ENCODE measurements at regions of chr2 and their contacts with region 1.

Region 1: DNA sequence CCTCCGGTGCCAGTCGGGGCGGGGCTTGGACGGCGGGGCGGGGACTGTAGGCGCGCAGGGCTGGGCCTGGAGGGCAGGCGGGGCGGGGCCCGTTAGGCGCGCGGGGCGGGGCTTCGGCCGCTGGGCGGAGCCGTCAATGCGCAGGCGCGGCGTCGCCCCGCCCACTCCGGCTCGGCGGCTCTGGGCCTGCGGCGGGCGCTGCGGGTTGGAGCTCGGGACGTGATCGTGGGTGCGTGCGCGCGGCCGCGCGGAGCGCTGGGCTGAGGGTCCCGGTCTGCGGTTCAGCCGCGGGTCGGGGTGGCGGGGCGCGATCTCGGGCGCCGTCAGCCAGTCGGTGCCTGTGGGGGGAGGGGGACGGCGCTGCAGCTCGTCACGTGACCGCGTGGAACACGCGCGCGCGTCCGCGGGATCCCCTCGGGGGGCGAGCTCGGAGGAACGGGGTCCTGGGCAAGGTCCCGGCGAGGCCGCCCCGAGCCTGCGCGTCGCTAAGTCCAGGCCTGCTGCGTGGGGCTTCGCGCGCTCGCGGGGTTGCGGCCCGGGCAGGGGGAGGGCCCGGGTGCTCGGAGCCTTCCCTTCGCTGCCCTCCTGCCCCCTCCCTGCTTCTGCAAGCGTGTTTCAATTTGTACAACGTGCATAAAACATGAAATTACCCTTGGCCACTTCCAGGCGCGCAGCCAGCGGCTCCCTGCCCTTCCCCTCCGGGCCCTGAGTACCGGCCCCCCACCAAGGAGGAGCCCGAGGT is at the start of gene D2HGDH:
- H3K4me3 Mint-ChIP-seq: peak within 1 kb of the TSS; percentile 82
- H3K27ac Mint-ChIP-seq: peak within 1 kb of the TSS; percentile 70
- H3K4me1 Mint-ChIP-seq: peaks cover 54% of the 10 kb centered on the region
- H3K27me3 Mint-ChIP-seq: peaks cover 6% of the 10 kb centered on the region

Region 2: GRCh38 chr2:241702132-241703031 is 32.3 kb before region 1 on chr2:
- intact Hi-C with region 1: loop called (anchors 2 kb)
- H3K4me3 Mint-ChIP-seq: peak overlapping the region; percentile 78
- H3K27ac Mint-ChIP-seq: peak overlapping the region; percentile 81
- H3K4me1 Mint-ChIP-seq: peaks cover 18% of the 10 kb centered on the region
- H3K27me3 Mint-ChIP-seq: no peaks in the 10 kb centered on the region

Region 3: GRCh38 chr2:241859436-241860183 is 125.0 kb after region 1 on chr2:
- intact Hi-C with region 1: no loop called
- H3K4me3 Mint-ChIP-seq: no peak overlapping the region
- H3K27ac Mint-ChIP-seq: peak overlapping the region; percentile 64
- H3K4me1 Mint-ChIP-seq: peaks cover 6% of the 10 kb centered on the region
- H3K27me3 Mint-ChIP-seq: peaks cover 39% of the 10 kb centered on the region

Region 4: DNA sequence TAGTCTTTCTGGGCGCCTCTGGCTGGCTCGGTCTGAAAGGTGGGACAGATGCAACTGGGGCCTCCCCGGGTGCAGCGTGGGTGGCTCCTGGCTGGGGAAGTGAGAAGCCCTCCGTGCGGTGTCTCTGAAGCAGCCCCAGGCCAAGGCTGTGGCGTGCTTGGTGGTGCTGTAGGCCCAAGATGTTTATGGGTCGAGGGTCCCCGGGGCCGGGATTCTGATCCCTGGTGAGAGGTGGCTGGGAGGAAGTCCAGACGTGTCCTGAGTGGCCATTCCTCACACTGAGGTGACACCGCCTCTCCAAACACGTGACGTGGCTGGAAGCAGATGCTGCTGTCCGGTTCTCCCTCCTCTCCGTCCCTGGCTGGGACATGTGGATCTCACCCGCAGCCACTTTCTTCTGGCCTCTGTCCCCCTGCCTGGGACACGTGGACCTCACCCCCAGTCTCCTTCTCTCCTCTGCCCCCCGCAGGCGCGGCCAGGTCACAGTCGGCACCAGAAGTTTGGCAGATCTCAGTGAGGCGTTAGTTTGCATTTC is 147.5 kb after region 1 on chr2:
- intact Hi-C with region 1: loop called (anchors 10 kb)
- H3K4me3 Mint-ChIP-seq: peak overlapping the region; percentile 88
- H3K27ac Mint-ChIP-seq: peak overlapping the region; percentile 85
- H3K4me1 Mint-ChIP-seq: peaks cover 21% of the 10 kb centered on the region
- H3K27me3 Mint-ChIP-seq: peaks cover 2% of the 10 kb centered on the region

Region 5: GRCh38 chr2:241895712-241896641 is 161.3 kb after region 1 on chr2:
- intact Hi-C with region 1: no loop called
- H3K4me3 Mint-ChIP-seq: no peak overlapping the region
- H3K27ac Mint-ChIP-seq: no peak overlapping the region
- H3K4me1 Mint-ChIP-seq: no peaks in the 10 kb centered on the region
- H3K27me3 Mint-ChIP-seq: peaks cover 12% of the 10 kb centered on the region

Measured in dendritic cell treated with granulocyte-macrophage colony-stimulating factor and Interleukin-4, amounts not matched to agents 40 ng/mL and 50 ng/mL, for 4 days (primary cell).